Activated T-helper 1 cell treated with anti-CD3 and anti-CD28 coated beads, Interleukin-12 subunit alpha, Interleukin-12 subunit beta, Interleukin-2, Interleukin-4 antibody, amounts not matched to agents 30 ng/mL and 10 ng/mL and 1 ng/mL, durations not matched to agents 14 hours and 24 hours and 36 hours (primary cell): ENCODE measurements at regions of chr1 and their contacts with region 1.

Region 1: DNA sequence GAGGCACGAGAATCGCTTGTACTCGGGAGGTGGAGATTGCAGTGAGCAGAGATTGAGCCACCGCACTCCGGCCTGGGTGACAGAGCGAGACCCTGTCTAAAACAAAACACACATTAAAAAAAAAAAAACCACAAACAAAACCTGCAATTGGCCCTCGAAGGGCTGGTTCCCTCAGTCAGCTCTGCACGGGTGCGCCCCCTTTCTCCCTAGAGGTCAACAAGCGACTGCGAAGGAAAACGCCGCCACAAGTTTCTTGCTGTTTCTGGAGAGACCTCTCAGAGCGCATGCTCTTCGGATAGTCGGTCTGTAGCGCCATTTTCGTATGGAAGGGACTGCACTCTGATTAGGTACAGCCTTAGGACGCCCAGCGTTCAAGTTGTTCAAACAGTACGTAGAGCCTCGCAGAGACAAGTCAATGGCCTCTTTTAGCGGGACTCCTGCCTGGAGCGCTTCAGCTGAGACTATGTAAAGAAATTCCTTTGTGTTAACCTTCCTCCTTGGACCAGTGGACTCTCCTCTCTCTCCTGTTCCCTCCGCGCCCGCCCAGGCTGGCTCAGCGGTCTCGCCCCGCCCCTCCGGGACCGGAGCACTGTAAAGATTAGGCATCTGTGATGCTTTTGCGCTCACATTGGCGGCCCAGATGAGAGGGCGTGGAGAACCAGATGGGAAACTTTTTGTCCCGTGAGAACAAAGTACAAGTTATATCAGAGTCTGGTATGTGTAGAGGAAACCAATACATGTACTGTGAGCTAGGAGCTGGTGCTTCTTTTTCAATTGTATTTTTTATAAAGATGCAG is 1.0 kb upstream of the CDC14A start:
- DNase-seq: peak; percentile 85
- H3K4me3 Mint-ChIP-seq: peak overlapping the region; percentile 93
- H3K27ac Mint-ChIP-seq: peak overlapping the region; percentile 99
- H3K4me1 Mint-ChIP-seq: peaks cover 42% of the 10 kb centered on the region
- H3K27me3 Mint-ChIP-seq: peaks cover 2% of the 10 kb centered on the region

Region 2: GRCh38 chr1:99808391-99809115 is 542.7 kb before region 1 on chr1:
- intact Hi-C with region 1: loop called (anchors 1 kb)
- DNase-seq: peak; percentile 29
- H3K4me3 Mint-ChIP-seq: no peak overlapping the region
- H3K27ac Mint-ChIP-seq: peak overlapping the region; percentile 15
- H3K4me1 Mint-ChIP-seq: peaks cover 17% of the 10 kb centered on the region
- H3K27me3 Mint-ChIP-seq: peaks cover 13% of the 10 kb centered on the region

Region 3: DNA sequence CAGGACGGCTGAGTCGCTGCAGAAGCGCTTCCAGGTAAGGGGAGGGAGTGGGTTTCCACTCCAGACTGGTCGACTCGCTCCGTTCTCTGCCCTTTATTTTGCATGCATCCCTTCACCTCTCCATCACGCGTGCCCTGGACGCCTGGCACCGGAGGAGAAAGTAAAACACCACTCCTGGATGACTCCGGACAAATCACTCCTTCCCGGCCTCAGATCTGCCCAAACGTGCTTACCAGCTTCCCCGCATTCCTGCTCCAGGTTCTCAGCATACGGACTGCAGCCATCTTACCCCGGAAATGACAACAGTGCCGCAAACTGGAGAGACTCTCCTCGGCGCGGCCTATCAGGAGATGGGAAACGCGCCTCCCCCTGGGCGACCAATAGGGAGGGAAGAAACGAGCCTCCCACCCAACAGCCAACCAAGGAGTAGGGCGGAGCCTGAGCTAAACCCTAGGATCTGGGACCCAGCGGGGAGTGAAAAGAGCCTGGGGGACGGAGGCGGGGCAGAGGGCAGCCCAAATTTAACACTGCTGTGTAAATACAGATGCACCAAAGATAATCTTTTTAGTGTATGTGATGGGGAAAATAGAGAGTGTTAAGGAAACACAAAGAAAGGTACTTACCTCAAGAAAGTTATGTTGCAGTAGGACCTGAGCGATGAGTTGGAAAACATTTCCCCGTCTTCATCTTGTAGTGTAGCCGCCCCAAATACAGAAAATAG is 101.6 kb before region 1 on chr1 and contains the start of gene DBT:
- intact Hi-C with region 1: loop called (anchors 1 kb)
- DNase-seq: peak; percentile 92
- H3K4me3 Mint-ChIP-seq: no peak within 1 kb of the TSS
- H3K27ac Mint-ChIP-seq: no peak within 1 kb of the TSS
- H3K4me1 Mint-ChIP-seq: peaks cover 10% of the 10 kb centered on the region
- H3K27me3 Mint-ChIP-seq: peaks cover 12% of the 10 kb centered on the region
- total RNA-seq, gene DBT: 11.3 and 11.7 TPM in 2 replicates

Region 4: DNA sequence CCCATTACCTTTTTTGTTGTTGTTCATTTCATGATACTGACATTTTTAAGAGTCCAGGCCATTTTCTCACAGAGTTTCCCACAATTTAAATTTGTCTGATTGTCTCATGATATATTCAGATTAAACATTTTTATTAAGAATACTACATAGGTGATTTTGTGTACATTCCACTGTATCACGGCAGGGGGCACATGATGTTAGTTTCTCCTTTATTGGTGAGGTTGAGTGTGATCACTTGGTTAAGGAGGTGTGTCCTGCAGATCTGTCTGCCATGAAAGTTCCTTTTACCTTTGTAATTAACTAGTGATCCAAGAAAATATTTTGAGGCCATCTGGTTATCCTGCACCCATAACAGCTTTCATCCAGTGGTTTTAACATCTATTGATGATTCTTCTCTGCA is 73.4 kb before region 1 on chr1:
- intact Hi-C with region 1: loop called (anchors 2 kb)
- DNase-seq: no peak
- H3K4me3 Mint-ChIP-seq: no peak overlapping the region
- H3K27ac Mint-ChIP-seq: no peak overlapping the region
- H3K4me1 Mint-ChIP-seq: peaks cover 28% of the 10 kb centered on the region
- H3K27me3 Mint-ChIP-seq: no peaks in the 10 kb centered on the region

Region 5: DNA sequence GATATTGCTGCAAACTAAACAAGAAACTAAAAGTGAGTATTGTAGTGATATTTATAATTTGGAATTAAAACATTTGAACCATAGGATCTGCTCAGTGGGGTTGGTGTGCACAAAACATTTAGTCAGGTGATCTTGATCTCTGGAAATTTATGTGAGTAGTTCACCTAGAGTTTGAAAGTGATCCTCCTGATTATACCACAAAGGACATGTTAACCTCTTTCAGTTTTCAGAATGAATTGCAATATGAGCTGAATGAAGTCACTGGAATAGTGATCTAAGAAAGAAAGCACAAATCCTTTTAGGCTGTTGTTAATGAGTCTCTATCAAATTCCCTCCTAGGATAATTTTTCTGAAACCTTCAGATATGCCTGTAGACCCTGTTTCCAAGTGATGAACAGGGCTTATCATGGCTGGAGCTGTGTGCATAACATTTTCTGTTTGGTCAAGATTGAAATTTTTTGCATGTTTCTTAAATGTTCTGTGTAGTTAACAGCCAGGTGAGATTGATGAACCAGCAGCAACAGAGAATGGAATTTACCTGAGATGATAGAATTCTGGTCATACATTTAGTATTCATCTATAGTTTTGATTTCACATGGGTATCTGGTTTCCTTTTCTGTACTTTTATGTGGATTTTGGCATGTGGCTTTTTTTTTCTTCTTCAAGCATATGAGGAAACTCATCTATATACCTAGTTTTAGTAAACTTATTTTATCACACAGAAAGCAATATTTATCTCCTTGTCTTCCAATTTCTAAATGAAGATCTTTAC is 26.5 kb after region 1 on chr1:
- intact Hi-C with region 1: loop called (anchors 1 kb)
- DNase-seq: no peak
- H3K4me3 Mint-ChIP-seq: peak overlapping the region; percentile 38
- H3K27ac Mint-ChIP-seq: peak overlapping the region; percentile 75
- H3K4me1 Mint-ChIP-seq: peaks cover 55% of the 10 kb centered on the region
- H3K27me3 Mint-ChIP-seq: peaks cover 2% of the 10 kb centered on the region

Region 6: DNA sequence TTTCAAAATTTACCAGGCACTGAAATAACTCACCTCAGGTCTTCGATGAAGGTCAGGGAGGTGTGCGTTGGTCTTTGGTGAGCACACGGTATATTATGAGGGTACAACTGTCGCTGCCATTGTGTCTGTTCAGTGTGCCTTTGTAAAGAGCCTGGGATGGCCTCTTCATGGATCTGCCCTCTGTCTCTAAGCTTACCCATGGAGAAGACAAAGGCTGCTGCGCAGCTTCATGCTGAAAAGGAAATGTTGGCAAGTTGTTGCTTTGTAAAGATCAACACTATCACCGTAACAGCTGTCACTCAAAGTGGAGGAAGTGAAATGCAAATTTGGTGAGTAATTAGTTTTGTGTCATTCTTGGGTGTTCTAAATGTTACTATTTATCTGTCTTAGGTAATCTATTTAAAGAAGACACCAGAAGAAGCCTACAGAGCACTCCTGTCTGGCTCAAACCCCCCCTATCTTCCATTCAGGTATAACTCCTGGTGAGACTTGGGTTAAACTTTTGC is 72.6 kb after region 1 on chr1:
- intact Hi-C with region 1: loop called (anchors 2 kb)
- DNase-seq: no peak
- H3K4me3 Mint-ChIP-seq: peak overlapping the region; percentile 45
- H3K27ac Mint-ChIP-seq: peak overlapping the region; percentile 43
- H3K4me1 Mint-ChIP-seq: peaks cover 51% of the 10 kb centered on the region
- H3K27me3 Mint-ChIP-seq: peaks cover 2% of the 10 kb centered on the region

Region 7: GRCh38 chr1:100459358-100460114 is 108.2 kb after region 1 on chr1:
- intact Hi-C with region 1: loop called (anchors 1 kb)
- DNase-seq: peak; percentile 55
- H3K4me3 Mint-ChIP-seq: no peak overlapping the region
- H3K27ac Mint-ChIP-seq: no peak overlapping the region
- H3K4me1 Mint-ChIP-seq: peaks cover 43% of the 10 kb centered on the region
- H3K27me3 Mint-ChIP-seq: no peaks in the 10 kb centered on the region